Ascending aorta (tissue), 2 donors: ENCODE measurements at regions of chr14 and their contacts with region 1.

Region 1: GRCh38 chr14:68140111-68140741 is 320.6 kb downstream of the RAD51B start:
- DNase-seq: peak in 1 of 2 donors; percentile 83
- H3K4me3 ChIP-seq: no peak overlapping the region
- H3K27ac ChIP-seq: peak overlapping the region; percentile 68 to 76
- H3K4me1 ChIP-seq: peaks cover 0 to 47% of the 10 kb centered on the region in 2 donors
- H3K27me3 ChIP-seq: no peaks in the 10 kb centered on the region
- CTCF ChIP-seq: no peak

Region 2: DNA sequence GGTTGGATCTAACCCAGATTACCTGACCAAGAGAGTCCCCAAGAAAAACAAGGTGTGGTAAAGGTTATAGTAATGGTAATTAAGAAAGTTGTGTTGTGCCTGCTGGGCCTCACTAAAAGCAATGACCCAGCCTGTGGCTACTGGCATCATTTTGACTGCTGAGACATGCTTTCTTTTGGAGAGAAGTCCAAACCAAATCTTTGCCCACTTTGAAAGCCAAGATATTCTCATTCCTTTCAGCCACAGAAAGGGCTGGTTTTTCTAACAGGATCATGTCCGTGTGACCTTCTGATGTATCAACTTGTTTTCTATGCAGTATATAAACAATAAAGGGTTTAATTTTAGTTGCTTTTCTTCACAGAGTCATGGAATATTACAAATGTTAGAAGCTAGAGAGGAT is 68.0 kb after region 1 on chr14:
- intact Hi-C with region 1: loop called (anchors 5 kb)
- DNase-seq: no peak
- H3K4me3 ChIP-seq: no peak overlapping the region
- H3K27ac ChIP-seq: peak overlapping the region; percentile 73 to 76
- H3K4me1 ChIP-seq: peaks cover 22 to 41% of the 10 kb centered on the region in 2 donors
- H3K27me3 ChIP-seq: no peaks in the 10 kb centered on the region
- CTCF ChIP-seq: no peak

Region 3: DNA sequence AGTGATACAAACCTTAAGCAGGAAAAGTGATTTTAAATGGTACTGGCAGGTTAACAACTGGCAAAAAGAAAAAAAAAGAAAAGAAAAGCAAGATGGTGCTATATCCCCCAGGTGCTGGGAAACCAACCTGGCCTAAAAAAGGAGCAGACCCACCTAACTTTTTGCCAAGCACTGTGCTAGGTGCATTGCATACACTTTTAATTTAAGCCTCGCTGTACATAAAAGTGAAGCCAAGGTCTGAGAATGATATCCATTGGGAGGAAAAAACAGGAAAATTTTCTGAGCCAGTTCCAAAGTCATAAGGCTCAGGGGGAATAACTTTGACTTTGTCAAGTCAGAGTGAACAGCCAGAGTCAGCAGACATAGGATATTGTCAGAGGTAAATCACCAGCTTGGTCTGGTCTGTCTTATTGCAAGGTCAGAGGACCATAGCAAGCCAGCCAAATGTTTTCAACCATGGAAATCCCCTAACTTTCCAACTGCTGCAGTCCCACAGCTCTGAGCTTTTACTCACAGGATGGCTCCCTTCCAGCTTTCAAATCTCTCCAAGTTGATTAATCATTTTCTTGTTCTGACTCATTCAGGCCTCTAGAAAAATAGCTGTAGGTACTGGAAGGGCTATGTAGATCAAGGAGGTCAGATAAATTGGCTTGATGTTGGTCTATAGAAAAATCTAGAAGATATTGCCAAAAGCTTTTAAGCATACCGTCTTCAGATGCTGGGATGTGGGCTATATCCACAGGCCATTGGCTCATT is 92.3 kb after region 1 on chr14:
- intact Hi-C with region 1: loop called (anchors 10 kb)
- DNase-seq: peak in 1 of 2 donors; percentile 84
- H3K4me3 ChIP-seq: no peak overlapping the region
- H3K27ac ChIP-seq: peak overlapping the region; percentile 66 to 86
- H3K4me1 ChIP-seq: peaks cover 9 to 25% of the 10 kb centered on the region in 2 donors
- H3K27me3 ChIP-seq: no peaks in the 10 kb centered on the region
- CTCF ChIP-seq: no peak

Region 4: DNA sequence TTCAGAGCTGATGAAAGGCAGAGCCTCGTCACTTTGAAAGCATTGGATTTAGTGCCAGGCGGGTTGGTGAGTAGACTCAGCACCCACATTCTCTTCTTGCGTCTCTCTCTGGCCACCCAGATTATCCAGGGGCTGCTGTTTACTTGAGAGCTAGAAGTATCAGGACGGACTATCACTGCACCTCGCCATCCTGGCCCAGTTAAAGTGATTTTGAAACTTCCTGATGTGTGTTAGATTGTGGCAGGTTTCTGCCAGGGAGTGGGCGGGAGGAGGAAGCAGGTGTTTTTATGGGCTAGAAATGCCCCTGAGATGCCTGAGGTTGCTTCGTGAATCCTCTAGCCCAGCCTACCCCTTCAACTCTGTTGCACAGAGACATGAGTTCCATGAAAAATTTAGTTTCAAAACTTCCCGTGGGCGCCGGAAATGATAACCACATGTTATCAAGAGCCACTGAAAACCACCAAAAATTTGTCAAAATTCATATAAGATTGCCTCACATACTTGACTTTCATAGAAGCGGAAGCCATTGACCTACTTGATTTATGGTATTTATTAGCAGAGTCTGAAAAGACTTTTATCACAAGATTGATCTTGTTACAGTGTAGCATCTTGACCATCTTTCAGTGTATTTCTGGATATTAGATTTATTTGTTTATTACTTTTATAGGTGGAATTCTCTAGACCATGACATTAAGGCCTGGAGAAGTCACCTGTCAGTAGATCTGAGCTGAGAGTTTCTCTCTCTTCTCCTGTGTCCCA is 145.4 kb after region 1 on chr14:
- intact Hi-C with region 1: no loop called
- DNase-seq: no peak
- H3K4me3 ChIP-seq: no peak overlapping the region
- H3K27ac ChIP-seq: peak overlapping the region in 1 of 2 donors; percentile 12
- H3K4me1 ChIP-seq: peaks cover 8% of the 10 kb centered on the region in 2 donors
- H3K27me3 ChIP-seq: no peaks in the 10 kb centered on the region
- CTCF ChIP-seq: no peak

Region 5: GRCh38 chr14:68795597-68796417 is 655.6 kb after region 1 on chr14:
- intact Hi-C with region 1: loop called (anchors 5 kb)
- DNase-seq: peak in 1 of 2 donors; percentile 92
- H3K4me3 ChIP-seq: peak overlapping the region; percentile 77 to 92
- H3K27ac ChIP-seq: peak overlapping the region; percentile 100
- H3K4me1 ChIP-seq: peaks cover 0 to 10% of the 10 kb centered on the region in 2 donors
- H3K27me3 ChIP-seq: no peaks in the 10 kb centered on the region
- CTCF ChIP-seq: peak; percentile 91 to 94 (median 92)